ENCODE measurements at regions of chr18 and their contacts with region 1.

Region 1: GRCh38 chr18:61635901-61636528 is 256.8 kb downstream of the RNF152 start:
- DNase-seq: peak; percentile 84 to 86
- H3K4me3 ChIP-seq: peak overlapping the region in 1 of 4 donors; percentile 16
- H3K27ac ChIP-seq: peak overlapping the region; percentile 77 to 92 (median 83)
- H3K4me1 ChIP-seq: peaks cover 29 to 38% (median 33%) of the 10 kb centered on the region in 4 donors
- H3K27me3 ChIP-seq: no peaks in the 10 kb centered on the region
- CTCF ChIP-seq: peak in 5 of 7 experiments; percentile 51 to 86 (median 82)
- EP300 ChIP-seq: no peak
- POLR2A ChIP-seq: no peak

Region 2: DNA sequence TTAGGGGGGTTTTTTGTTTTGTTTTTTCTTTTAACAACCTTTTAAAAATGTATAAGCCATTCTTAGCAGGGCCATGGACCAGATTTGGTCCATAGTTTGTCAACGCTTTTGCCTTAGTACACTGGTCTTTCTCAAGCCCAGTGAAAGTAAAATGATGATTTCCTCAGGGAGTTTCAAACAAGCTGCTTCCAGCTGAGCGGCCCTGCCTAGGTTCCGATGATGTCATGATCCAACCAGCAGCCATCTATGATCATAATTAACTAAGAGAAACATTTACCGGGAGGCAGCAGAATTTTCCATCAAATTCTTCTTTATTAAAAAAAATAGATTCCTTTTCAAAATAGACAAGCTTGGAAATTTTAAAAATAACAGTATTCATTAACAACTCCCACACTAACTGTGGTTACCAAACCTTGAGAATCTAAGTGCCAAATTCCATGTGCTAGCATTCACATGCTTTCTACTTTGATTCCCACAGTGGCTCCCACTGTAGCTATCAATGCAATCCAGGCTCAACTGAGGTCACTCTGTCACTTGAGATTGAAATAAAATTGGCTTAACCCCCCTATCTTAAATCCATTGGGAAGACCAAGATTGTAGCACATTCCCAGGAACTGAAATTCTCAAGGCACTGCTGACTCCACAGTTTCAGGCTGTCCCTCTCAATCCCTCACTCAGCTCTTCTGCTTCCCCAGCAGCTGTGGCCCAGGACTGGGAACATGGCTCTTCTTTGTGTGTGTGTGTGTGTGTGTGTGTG is 107.9 kb after region 1 on chr18:
- intact Hi-C with region 1: no loop called
- DNase-seq: peak in 1 of 2 donors; percentile 65
- H3K4me3 ChIP-seq: no peak overlapping the region
- H3K27ac ChIP-seq: peak overlapping the region in 3 of 5 donors; percentile 47 to 63 (median 54)
- H3K4me1 ChIP-seq: peaks cover 0 to 10% (median 2%) of the 10 kb centered on the region in 4 donors
- H3K27me3 ChIP-seq: no peaks in the 10 kb centered on the region
- CTCF ChIP-seq: no peak
- EP300 ChIP-seq: no peak
- POLR2A ChIP-seq: no peak

Region 3: GRCh38 chr18:61893971-61894750 is 258.1 kb after region 1 on chr18:
- intact Hi-C with region 1: loop called (anchors 5 kb)
- DNase-seq: peak; percentile 89 to 94
- H3K4me3 ChIP-seq: peak overlapping the region; percentile 65 to 95 (median 92)
- H3K27ac ChIP-seq: peak overlapping the region; percentile 86 to 95 (median 94)
- H3K4me1 ChIP-seq: peaks cover 17 to 55% (median 43%) of the 10 kb centered on the region in 4 donors
- H3K27me3 ChIP-seq: peaks cover 0 to 29% (median 0%) of the 10 kb centered on the region in 3 donors
- CTCF ChIP-seq: peak in 2 of 7 experiments; percentile 21 to 50
- EP300 ChIP-seq: no peak
- POLR2A ChIP-seq: no peak

Measured in stomach (tissue), 19 donors.